ENCODE measurements at regions of chr5 and their contacts with region 1.

Region 1: GRCh38 chr5:10563945-10564837 is at the start of gene ANKRD33B:
- DNase-seq: no peak
- H3K4me3 ChIP-seq: peak within 1 kb of the TSS; percentile 54 to 63
- H3K27ac ChIP-seq: peak within 1 kb of the TSS; percentile 46 to 70
- H3K4me1 ChIP-seq: no peaks in the 10 kb centered on the region
- H3K27me3 ChIP-seq: no peaks in the 10 kb centered on the region
- CTCF ChIP-seq: no peak
- POLR2A ChIP-seq: no peak
- total RNA-seq, gene ANKRD33B: 4.1 to 7.4 TPM

Region 2: GRCh38 chr5:10583663-10584572 is 19.7 kb after region 1 on chr5:
- intact Hi-C with region 1: loop called (anchors 2 kb)
- DNase-seq: no peak
- H3K4me3 ChIP-seq: no peak overlapping the region
- H3K27ac ChIP-seq: no peak overlapping the region
- H3K4me1 ChIP-seq: no peaks in the 10 kb centered on the region
- H3K27me3 ChIP-seq: no peaks in the 10 kb centered on the region
- CTCF ChIP-seq: no peak
- POLR2A ChIP-seq: no peak

Region 3: DNA sequence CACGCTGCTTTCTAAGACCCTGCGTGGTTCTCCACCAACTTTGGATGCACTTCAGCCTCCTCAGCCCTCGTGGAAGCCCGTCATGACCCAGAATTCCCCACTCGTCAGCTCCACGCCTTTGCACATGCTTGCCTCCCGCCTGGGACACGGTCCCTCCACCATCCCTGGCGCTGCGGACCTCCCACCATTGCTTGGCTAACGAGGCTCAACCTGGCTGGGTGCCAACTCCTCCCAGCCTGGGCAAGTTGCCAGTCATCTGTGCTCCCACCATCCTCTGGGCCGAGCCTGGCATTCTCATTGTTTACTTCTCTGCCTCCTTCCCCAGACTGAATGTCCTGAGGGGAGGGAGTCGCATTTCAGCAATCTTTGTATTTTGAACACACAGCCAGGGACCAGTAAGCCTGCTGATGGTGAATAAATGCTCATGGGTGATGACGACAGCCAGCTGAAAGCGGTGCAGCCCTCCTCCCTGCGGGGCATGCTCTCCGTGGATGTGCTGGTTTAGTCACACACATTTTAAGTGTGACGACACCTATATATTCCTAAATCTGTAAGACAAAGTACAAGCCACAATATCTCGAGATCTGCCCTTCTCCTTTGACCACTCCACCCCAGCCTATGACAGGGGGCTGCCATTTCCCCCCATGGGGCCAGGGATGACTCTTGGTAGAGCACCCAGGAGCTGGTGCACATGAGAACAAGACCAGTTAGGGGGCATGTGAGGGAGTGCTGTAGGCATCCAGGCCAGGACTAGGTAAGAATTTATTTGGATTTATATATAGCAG is 37.2 kb after region 1 on chr5:
- intact Hi-C with region 1: loop called (anchors 1 kb)
- DNase-seq: peak; percentile 58
- H3K4me3 ChIP-seq: no peak overlapping the region
- H3K27ac ChIP-seq: peak overlapping the region; percentile 1 to 10
- H3K4me1 ChIP-seq: no peaks in the 10 kb centered on the region
- H3K27me3 ChIP-seq: no peaks in the 10 kb centered on the region
- CTCF ChIP-seq: no peak
- POLR2A ChIP-seq: no peak

Region 4: GRCh38 chr5:10627160-10627701 is 63.0 kb after region 1 on chr5:
- intact Hi-C with region 1: loop called (anchors 1 kb)
- DNase-seq: no peak
- H3K4me3 ChIP-seq: peak overlapping the region in 1 of 2 donors; percentile 6
- H3K27ac ChIP-seq: peak overlapping the region; percentile 44 to 59
- H3K4me1 ChIP-seq: peaks cover 9% of the 10 kb centered on the region
- H3K27me3 ChIP-seq: no peaks in the 10 kb centered on the region
- CTCF ChIP-seq: no peak
- POLR2A ChIP-seq: no peak

Region 5: DNA sequence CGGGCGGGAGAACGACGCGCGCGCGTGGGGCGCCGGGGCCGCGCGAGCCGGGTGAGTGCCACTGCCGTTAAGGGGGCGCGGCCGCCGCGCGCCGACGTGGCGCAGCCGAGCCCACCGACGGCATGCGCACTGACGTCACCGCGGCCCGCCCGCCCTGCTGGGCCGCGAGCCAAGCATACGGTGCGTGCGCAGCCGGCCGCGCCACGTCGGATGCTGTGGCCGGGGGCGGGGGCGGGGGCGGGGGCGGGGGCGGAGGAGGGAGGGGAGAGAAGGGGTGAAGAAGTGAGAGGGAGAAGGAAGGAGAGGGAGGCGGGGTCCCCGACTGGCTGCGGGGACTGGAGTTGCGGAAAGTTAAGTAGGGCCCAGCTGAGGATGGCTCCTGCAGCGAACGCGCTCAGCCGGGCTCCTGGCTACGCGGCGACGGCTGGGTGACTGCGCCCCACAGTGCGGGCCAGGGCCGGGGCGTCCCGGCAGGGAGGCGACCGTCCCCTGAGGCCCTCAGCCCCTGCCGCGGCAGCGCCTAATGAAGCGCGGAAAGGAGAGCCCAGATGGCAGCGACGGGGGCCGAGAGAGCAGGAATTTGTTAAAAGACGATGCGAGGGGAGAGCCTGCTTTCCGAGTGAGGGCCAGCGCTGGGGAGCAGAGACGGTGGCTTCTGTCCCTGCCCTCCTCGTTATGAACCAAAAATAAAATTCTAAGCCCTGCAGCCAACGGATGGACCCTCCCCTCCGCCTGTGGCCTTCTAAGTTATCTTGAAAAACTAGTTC is 197.2 kb after region 1 on chr5 and contains the start of gene DAP:
- intact Hi-C with region 1: loop called (anchors 10 kb)
- DNase-seq: peak; percentile 74
- H3K4me3 ChIP-seq: peak within 1 kb of the TSS; percentile 76 to 84
- H3K27ac ChIP-seq: peak within 1 kb of the TSS; percentile 98 to 99
- H3K4me1 ChIP-seq: peaks cover 6% of the 10 kb centered on the region
- H3K27me3 ChIP-seq: no peaks in the 10 kb centered on the region
- CTCF ChIP-seq: peak in 1 of 4 experiments; percentile 13
- POLR2A ChIP-seq: peak; percentile 37
- total RNA-seq, gene DAP: 86.2 to 111 TPM

Measured in prostate gland (tissue), 2 donors.